ENCODE measurements at regions of chr14 and their contacts with region 1.

Region 1: GRCh38 chr14:31580234-31580633 is 19.0 kb downstream of the NUBPL start:
- DNase-seq: no peak
- H3K4me3 ChIP-seq: no peak overlapping the region
- H3K27ac ChIP-seq: no peak overlapping the region
- H3K4me1 ChIP-seq: no peaks in the 10 kb centered on the region
- H3K27me3 ChIP-seq: no peaks in the 10 kb centered on the region
- CTCF ChIP-seq: no peak

Region 2: DNA sequence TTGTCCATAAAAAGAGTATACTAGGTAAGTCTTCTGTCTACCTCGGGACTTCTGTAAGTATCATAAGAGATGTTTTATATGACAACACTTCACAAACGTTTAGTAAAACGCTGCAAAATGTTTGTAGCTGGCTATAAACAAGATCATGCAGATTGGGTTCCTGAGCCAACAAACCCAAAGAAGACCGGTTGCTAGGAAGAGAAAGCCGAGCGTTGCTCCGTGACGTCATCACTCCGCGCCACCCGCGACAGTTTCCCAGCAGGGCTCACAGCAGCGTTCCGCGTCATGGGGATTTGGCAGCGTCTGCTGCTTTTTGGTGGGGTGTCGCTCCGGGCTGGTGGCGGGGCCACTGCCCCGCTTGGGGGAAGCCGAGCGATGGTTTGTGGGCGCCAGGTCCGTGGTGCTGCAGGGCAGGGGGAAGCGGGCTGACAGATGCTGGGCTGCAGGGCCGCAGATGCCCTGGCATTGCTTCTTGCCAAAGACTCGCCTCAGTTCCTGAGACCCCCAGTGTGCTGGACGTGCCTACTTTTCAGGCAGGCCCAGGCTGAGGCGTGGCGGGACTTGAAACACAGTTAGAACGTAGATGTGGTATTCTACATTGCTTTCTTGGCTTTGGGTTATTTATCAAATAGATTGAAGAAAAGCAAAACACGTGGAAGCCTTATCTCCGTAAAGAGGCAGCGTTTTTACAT is 18.9 kb before region 1 on chr14 and contains the start of gene NUBPL:
- CTCF ChIA-PET with region 1: no interaction called
- POLR2A ChIA-PET with region 1: interaction called, 18 read pairs
- intact Hi-C with region 1: no loop called
- DNase-seq: peak; percentile 74 to 86
- H3K4me3 ChIP-seq: peak within 1 kb of the TSS; percentile 73
- H3K27ac ChIP-seq: peak within 1 kb of the TSS; percentile 43
- H3K4me1 ChIP-seq: no peaks in the 10 kb centered on the region
- H3K27me3 ChIP-seq: no peaks in the 10 kb centered on the region
- CTCF ChIP-seq: no peak
- total RNA-seq, gene NUBPL: 14.6 and 15.7 TPM in 2 replicates

Region 3: DNA sequence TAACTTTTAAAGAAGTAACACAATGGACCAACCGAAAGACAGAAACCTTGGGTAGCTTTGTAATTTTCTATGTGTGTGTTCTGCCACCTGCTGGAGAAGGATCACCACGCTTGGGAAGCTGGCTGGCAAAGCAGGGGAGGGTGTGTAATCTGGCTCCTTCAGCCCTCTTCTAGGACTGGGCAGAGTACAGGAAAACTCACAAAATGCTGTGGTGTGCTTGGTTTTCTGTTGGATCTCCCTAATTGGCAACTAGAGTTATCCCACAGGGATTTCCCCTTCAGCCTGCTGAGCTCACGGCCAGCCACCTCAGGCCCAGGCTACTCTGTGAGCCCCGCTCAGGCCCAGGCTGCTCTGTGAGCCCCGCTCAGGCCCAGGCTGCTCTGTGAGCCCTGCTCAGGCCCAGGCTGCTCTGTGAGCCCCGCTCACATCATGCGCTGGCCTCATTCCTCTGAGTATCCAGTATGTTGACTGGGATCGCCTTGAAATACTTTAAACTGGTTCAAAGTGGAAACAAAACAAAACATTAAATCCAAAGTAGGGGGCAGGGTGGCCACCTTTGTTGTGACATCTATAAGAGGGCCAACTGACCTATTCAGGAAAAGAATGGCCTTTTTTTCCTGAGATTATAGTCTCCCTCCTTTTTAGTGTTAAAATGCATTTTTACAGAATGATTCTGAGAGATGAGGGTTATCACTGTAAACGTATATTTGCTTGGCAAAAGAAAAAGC is 674.9 kb after region 1 on chr14:
- CTCF ChIA-PET with region 1: no interaction called
- POLR2A ChIA-PET with region 1: no interaction called
- intact Hi-C with region 1: no loop called
- DNase-seq: peak; percentile 35 to 45
- H3K4me3 ChIP-seq: no peak overlapping the region
- H3K27ac ChIP-seq: no peak overlapping the region
- H3K4me1 ChIP-seq: peaks cover 20% of the 10 kb centered on the region
- H3K27me3 ChIP-seq: no peaks in the 10 kb centered on the region
- CTCF ChIP-seq: peak; percentile 75

Measured in PC-9 (cell line).